B cell (primary cell): ENCODE measurements at regions of chr4 and their contacts with region 1.

Region 1: DNA sequence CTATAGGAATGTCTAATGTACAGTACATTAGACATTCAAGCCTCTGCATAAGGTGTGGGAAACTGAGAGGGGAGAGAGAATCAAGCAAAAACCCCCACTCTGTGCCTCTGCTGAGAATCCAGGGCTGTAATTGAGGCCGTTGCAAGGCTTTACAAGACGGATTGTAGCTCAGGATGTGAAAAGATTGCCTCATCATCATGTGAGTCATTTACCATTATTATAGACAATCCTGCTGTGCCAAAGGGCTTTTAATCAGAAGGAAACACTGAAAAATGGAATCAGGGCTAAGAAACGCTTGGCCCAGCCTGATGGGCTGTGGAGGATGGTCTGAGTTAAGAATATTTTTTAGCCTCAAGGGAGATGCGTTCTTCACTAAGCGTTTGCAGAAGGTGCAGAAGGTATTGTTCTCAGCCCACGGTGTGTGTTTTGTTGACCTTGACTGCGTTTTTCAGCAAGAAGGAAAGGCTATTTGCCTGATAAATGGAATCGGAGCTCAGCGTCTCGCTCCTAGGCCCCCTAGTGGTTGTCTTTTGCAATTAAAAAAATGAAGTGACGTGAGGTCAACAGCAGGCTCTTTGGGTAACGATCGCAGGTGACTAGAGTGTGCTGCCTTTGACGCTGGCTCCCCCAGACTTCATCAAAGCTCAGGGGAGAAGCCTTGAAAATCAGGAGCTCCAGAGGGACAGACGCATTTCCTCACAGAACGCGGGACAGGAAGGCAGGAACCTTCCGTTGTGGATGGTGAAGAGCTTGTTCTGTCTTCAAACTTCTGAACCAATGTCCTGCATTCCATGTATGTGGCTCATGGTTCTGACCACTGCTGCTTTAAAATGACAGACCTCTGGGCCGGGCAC is 18.1 kb upstream of the CHRNA9 start:
- DNase-seq: peak; percentile 87
- ATAC-seq: peak; percentile 84
- H3K4me3 ChIP-seq: peak overlapping the region; percentile 25 to 62 (median 58)
- H3K4me3 Mint-ChIP-seq: peak overlapping the region; percentile 83
- H3K27ac ChIP-seq: peak overlapping the region; percentile 57 to 78
- H3K27ac Mint-ChIP-seq: peak overlapping the region; percentile 85
- H3K4me1 ChIP-seq: peaks cover 18 to 20% of the 10 kb centered on the region in 2 donors
- H3K4me1 Mint-ChIP-seq: peaks cover 32% of the 10 kb centered on the region
- H3K27me3 ChIP-seq: no peaks in the 10 kb centered on the region
- H3K27me3 Mint-ChIP-seq: no peaks in the 10 kb centered on the region
- CTCF ChIP-seq: peak; percentile 90

Region 2: GRCh38 chr4:38782452-38783108 is 1534.4 kb before region 1 on chr4 and contains the start of gene TLR10:
- CTCF ChIA-PET with region 1: no interaction called
- POLR2A ChIA-PET with region 1: interaction called, 12 read pairs
- intact Hi-C with region 1: no loop called
- DNase-seq: peak; percentile 88
- ATAC-seq: peak; percentile 90
- H3K4me3 ChIP-seq: peak within 1 kb of the TSS; percentile 50 to 92 (median 72)
- H3K4me3 Mint-ChIP-seq: peak within 1 kb of the TSS; percentile 95
- H3K27ac ChIP-seq: peak within 1 kb of the TSS; percentile 78 to 83
- H3K27ac Mint-ChIP-seq: peak within 1 kb of the TSS; percentile 96
- H3K4me1 ChIP-seq: peaks cover 34 to 51% of the 10 kb centered on the region in 2 donors
- H3K4me1 Mint-ChIP-seq: peaks cover 57% of the 10 kb centered on the region
- H3K27me3 ChIP-seq: no peaks in the 10 kb centered on the region
- H3K27me3 Mint-ChIP-seq: no peaks in the 10 kb centered on the region
- CTCF ChIP-seq: peak; percentile 83
- total RNA-seq, gene TLR10: 51.5 and 53.4 TPM in 2 replicates

Region 3: DNA sequence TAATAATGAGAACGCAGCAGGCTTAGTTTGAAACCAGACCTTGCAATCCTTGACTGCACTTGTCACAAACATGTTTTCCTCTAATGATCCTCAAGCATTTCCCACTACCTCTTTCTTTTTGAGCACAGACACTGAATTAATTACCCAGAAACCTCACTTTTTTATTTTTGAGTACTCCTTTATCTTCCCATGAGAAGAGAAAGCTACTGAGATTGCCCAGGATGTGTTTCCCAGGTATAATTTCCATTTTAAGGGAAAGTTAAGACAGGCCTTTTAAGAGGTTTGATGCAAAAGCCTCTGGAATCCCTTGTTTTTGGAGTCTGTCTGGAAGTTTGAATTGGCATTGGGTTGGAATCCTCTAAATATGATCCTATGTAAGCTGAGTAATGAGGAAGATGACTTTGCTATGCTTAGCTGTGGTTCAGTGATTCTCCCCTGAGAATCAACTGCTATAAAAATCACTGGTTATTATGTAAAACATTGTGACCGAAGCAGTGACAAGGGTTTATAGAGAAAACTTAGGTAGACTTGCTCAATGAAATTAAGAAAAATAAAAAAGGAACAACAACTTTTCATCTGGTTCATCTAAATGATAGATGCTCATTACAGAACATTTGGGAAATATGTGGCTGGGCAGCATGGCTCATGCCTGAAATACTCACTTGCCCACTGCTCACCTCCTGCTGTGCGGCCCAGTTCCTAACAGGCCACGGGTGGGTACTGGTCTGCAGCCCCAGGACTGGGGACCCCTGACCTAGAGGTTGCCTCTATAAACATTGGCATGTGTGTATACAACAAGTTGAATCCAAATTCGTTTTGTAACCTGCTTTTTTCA is 131.0 kb before region 1 on chr4:
- CTCF ChIA-PET with region 1: interaction called, 93 read pairs
- POLR2A ChIA-PET with region 1: interaction called, 3 read pairs
- intact Hi-C with region 1: no loop called
- DNase-seq: peak; percentile 87
- ATAC-seq: peak; percentile 79
- H3K4me3 ChIP-seq: peak overlapping the region; percentile 11 to 61 (median 37)
- H3K4me3 Mint-ChIP-seq: peak overlapping the region; percentile 85
- H3K27ac ChIP-seq: peak overlapping the region; percentile 92 to 94
- H3K27ac Mint-ChIP-seq: peak overlapping the region; percentile 97
- H3K4me1 ChIP-seq: peaks cover 60 to 88% of the 10 kb centered on the region in 2 donors
- H3K4me1 Mint-ChIP-seq: peaks cover 76% of the 10 kb centered on the region
- H3K27me3 ChIP-seq: no peaks in the 10 kb centered on the region
- H3K27me3 Mint-ChIP-seq: no peaks in the 10 kb centered on the region
- CTCF ChIP-seq: no peak

Region 4: GRCh38 chr4:40199999-40200874 is 116.8 kb before region 1 on chr4:
- CTCF ChIA-PET with region 1: interaction called, 47 read pairs
- POLR2A ChIA-PET with region 1: interaction called, 4 read pairs
- intact Hi-C with region 1: no loop called
- DNase-seq: peak; percentile 63
- ATAC-seq: peak; percentile 19
- H3K4me3 ChIP-seq: peak overlapping the region; percentile 79 to 99 (median 90)
- H3K4me3 Mint-ChIP-seq: peak overlapping the region; percentile 96
- H3K27ac ChIP-seq: peak overlapping the region; percentile 93 to 99
- H3K27ac Mint-ChIP-seq: peak overlapping the region; percentile 91
- H3K4me1 ChIP-seq: peaks cover 53 to 60% of the 10 kb centered on the region in 2 donors
- H3K4me1 Mint-ChIP-seq: peaks cover 64% of the 10 kb centered on the region
- H3K27me3 ChIP-seq: no peaks in the 10 kb centered on the region
- H3K27me3 Mint-ChIP-seq: no peaks in the 10 kb centered on the region
- CTCF ChIP-seq: no peak

Region 5: GRCh38 chr4:40228497-40229365 is 88.3 kb before region 1 on chr4:
- CTCF ChIA-PET with region 1: interaction called, 135 read pairs
- POLR2A ChIA-PET with region 1: no interaction called
- intact Hi-C with region 1: no loop called
- DNase-seq: no peak
- ATAC-seq: no peak
- H3K4me3 ChIP-seq: no peak overlapping the region
- H3K4me3 Mint-ChIP-seq: peak overlapping the region; percentile 57
- H3K27ac ChIP-seq: peak overlapping the region in 1 of 2 donors; percentile 72
- H3K27ac Mint-ChIP-seq: peak overlapping the region; percentile 51
- H3K4me1 ChIP-seq: peaks cover 73 to 90% of the 10 kb centered on the region in 2 donors
- H3K4me1 Mint-ChIP-seq: peaks cover 84% of the 10 kb centered on the region
- H3K27me3 ChIP-seq: no peaks in the 10 kb centered on the region
- H3K27me3 Mint-ChIP-seq: no peaks in the 10 kb centered on the region
- CTCF ChIP-seq: peak; percentile 62

Region 6: DNA sequence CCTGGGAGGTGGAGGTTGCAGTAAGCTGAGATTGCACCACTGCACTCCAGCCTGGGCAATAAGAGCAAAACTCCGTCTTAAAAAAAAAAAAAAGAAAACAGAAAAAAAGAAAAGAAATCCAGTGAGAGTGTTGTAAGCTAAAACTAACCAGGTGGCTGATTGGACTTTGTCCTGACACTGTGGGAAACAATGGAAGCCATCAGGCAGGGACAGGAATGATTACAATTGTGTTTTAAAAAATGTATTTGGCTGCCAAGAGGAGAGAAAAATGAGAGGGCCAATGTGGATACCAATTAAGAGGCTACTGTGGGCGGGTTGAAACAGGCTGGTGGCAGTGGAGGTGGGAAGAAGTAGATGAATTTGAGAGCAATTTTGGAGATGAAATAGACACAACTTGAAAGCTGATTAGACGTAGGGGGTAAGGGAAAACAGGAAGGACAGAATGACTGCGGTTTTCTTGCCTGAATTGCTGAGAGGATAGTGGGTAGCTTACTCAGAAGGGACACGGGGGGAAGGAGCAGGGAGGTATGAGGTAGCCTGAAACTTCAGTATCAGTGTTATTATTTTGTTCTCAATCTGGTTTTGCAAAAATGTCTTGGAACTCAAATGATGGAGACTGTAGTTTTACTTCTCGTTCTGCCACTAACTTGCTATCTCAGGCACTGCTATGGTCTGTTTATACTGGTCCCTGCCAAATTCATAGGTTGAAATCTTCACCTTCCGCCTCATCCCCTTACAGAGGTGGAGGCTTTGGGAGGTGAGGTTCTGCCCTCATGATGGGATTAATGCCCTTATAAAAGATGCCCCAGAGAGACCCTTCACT is 27.4 kb before region 1 on chr4:
- CTCF ChIA-PET with region 1: interaction called, 11 read pairs
- POLR2A ChIA-PET with region 1: no interaction called
- intact Hi-C with region 1: no loop called
- DNase-seq: peak; percentile 61
- ATAC-seq: peak; percentile 58
- H3K4me3 ChIP-seq: peak overlapping the region in 3 of 5 experiments; percentile 6 to 27 (median 15)
- H3K4me3 Mint-ChIP-seq: peak overlapping the region; percentile 76
- H3K27ac ChIP-seq: peak overlapping the region; percentile 78 to 86
- H3K27ac Mint-ChIP-seq: peak overlapping the region; percentile 92
- H3K4me1 ChIP-seq: peaks cover 63 to 70% of the 10 kb centered on the region in 2 donors
- H3K4me1 Mint-ChIP-seq: peaks cover 68% of the 10 kb centered on the region
- H3K27me3 ChIP-seq: no peaks in the 10 kb centered on the region
- H3K27me3 Mint-ChIP-seq: no peaks in the 10 kb centered on the region
- CTCF ChIP-seq: no peak

Region 7: GRCh38 chr4:40423735-40424134 is 106.7 kb after region 1 on chr4:
- CTCF ChIA-PET with region 1: no interaction called
- POLR2A ChIA-PET with region 1: no interaction called
- intact Hi-C with region 1: no loop called
- DNase-seq: no peak
- ATAC-seq: no peak
- H3K4me3 ChIP-seq: no peak overlapping the region
- H3K4me3 Mint-ChIP-seq: no peak overlapping the region
- H3K27ac ChIP-seq: no peak overlapping the region
- H3K27ac Mint-ChIP-seq: no peak overlapping the region
- H3K4me1 ChIP-seq: no peaks in the 10 kb centered on the region
- H3K4me1 Mint-ChIP-seq: no peaks in the 10 kb centered on the region
- H3K27me3 ChIP-seq: no peaks in the 10 kb centered on the region
- H3K27me3 Mint-ChIP-seq: no peaks in the 10 kb centered on the region
- CTCF ChIP-seq: no peak